ENCODE measurements at regions of chr12 and their contacts with region 1.

Region 1: GRCh38 chr12:40745386-40745785 is 53.1 kb downstream of the CNTN1 start:
- DNase-seq: peak; percentile 3
- H3K4me3 Mint-ChIP-seq: no peak overlapping the region
- H3K27ac Mint-ChIP-seq: no peak overlapping the region
- H3K4me1 Mint-ChIP-seq: peaks cover 8% of the 10 kb centered on the region
- H3K27me3 Mint-ChIP-seq: no peaks in the 10 kb centered on the region
- CTCF ChIP-seq: no peak

Region 2: GRCh38 chr12:39116867-39117266 is 1628.5 kb before region 1 on chr12:
- CTCF ChIA-PET with region 1: no interaction called
- intact Hi-C with region 1: no loop called
- DNase-seq: no peak
- H3K4me3 Mint-ChIP-seq: no peak overlapping the region
- H3K27ac Mint-ChIP-seq: no peak overlapping the region
- H3K4me1 Mint-ChIP-seq: no peaks in the 10 kb centered on the region
- H3K27me3 Mint-ChIP-seq: no peaks in the 10 kb centered on the region
- CTCF ChIP-seq: no peak

Region 3: DNA sequence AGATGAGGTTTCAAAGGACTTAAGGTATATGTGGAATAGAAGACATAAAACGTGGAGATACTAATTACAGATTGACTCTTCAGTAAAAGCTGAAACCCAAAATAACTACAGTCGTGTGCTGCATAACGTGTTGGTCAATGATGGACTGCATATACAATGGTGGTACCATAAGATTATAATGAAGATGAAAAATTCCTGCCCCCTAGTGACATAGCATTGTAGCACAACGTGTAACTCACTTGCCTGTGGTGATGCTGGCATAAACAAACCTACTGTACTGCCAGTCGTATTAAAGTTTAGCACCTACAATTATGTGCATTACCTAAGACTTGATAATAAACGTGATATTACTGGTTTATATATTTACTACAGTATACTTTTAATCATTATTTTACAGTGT is 370.3 kb before region 1 on chr12:
- CTCF ChIA-PET with region 1: no interaction called
- intact Hi-C with region 1: no loop called
- DNase-seq: no peak
- H3K4me3 Mint-ChIP-seq: no peak overlapping the region
- H3K27ac Mint-ChIP-seq: no peak overlapping the region
- H3K4me1 Mint-ChIP-seq: no peaks in the 10 kb centered on the region
- H3K27me3 Mint-ChIP-seq: no peaks in the 10 kb centered on the region
- CTCF ChIP-seq: no peak

Region 4: GRCh38 chr12:40622246-40622838 is 123.0 kb before region 1 on chr12:
- CTCF ChIA-PET with region 1: no interaction called
- intact Hi-C with region 1: loop called (anchors 10 kb)
- DNase-seq: peak; percentile 49
- H3K4me3 Mint-ChIP-seq: no peak overlapping the region
- H3K27ac Mint-ChIP-seq: no peak overlapping the region
- H3K4me1 Mint-ChIP-seq: no peaks in the 10 kb centered on the region
- H3K27me3 Mint-ChIP-seq: no peaks in the 10 kb centered on the region
- CTCF ChIP-seq: no peak

Region 5: GRCh38 chr12:40691913-40692764 is 53.2 kb before region 1 on chr12 and contains the start of gene CNTN1:
- CTCF ChIA-PET with region 1: no interaction called
- intact Hi-C with region 1: no loop called
- DNase-seq: no peak
- H3K4me3 Mint-ChIP-seq: no peak within 1 kb of the TSS
- H3K27ac Mint-ChIP-seq: no peak within 1 kb of the TSS
- H3K4me1 Mint-ChIP-seq: peaks cover 7% of the 10 kb centered on the region
- H3K27me3 Mint-ChIP-seq: no peaks in the 10 kb centered on the region
- CTCF ChIP-seq: no peak
- total RNA-seq, gene CNTN1: not detected in 2 replicates

Region 6: DNA sequence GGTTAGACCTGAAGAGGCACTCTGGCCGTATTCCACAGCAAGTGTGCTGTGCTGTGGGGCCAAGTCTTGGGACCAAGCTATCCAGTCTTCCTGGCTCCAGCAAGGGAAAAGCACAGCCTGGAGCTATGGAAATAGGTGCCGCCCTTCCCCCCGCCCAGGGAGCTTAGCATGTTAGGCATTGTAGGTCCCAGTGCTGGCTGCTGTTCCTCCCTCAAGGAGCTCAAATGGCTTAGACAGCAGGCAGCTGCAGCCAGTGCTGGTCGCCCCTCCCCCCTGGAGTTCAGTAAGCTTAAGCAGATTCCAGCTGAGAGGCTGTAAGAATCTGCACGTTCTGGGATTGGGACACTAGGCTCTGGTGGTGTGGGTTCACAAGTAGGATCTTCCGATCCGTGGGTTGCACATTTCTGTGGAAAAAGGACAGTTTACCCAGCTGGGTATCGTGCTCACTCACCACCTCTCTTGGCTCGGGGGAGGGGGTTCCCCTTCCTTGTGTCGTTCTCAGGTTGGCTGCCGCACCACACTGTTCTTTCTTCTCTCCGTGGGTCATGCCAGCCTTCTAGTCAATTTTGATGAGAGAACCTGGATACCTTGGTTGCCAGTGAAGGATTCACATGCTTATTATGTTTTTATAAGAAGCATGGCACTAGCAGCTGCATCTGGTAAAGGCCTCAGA is 74.2 kb after region 1 on chr12:
- CTCF ChIA-PET with region 1: no interaction called
- intact Hi-C with region 1: no loop called
- DNase-seq: no peak
- H3K4me3 Mint-ChIP-seq: no peak overlapping the region
- H3K27ac Mint-ChIP-seq: no peak overlapping the region
- H3K4me1 Mint-ChIP-seq: no peaks in the 10 kb centered on the region
- H3K27me3 Mint-ChIP-seq: no peaks in the 10 kb centered on the region
- CTCF ChIP-seq: no peak

Measured in Calu3 (cell line).